Dorsolateral prefrontal cortex (tissue), 120 donors: ENCODE measurements at regions of chr10 and their contacts with region 1.

Region 1: DNA sequence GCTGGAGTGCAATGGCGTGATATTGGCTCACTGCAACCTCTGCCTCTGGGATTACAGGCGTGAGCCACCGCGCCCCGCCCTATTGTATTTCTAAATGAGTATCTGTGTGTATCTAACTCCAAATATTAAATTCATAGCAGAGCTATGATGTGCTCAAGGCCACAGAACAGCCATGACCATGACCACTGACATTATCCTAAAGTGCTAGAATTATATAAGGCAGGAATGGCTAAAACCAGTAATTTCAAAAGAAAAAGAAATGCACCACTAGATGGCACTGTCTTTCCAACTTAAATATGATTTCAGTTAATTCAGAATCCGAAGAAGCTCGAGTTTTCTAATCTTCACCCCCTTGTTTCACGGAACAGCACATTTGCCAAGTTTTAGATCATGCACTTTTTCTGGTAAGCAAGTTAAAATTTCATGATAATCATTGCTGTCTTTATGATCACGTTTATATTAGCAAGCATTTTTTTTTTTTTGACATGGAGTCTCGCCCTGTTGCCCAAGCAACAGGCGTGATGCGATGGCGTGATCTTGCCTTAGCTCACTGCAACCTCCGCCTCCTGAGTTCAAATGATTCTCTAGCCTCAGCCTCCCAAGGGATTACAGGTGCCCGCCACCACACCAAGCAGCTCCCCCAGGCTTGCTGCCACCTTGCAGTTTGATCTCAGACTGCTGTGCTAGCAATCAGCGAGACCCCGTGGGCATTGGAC is 65.3 kb downstream of the OR13A1 start:
- DNase-seq: peak in 2 of 10 donors; percentile 10 to 15
- H3K4me3 ChIP-seq: peak overlapping the region in 46 of 59 donors; percentile 3 to 49 (median 28)
- H3K27ac ChIP-seq: no peak overlapping the region
- H3K27me3 ChIP-seq: peaks cover 0 to 3% (median 0%) of the 10 kb centered on the region in 45 donors
- CTCF ChIP-seq: peak; percentile 62 to 87 (median 77)

Region 2: GRCh38 chr10:45548068-45548467 is 297.9 kb after region 1 on chr10:
- intact Hi-C with region 1: no loop called
- DNase-seq: peak in 1 of 10 donors; percentile 45
- H3K4me3 ChIP-seq: no peak overlapping the region
- H3K27ac ChIP-seq: peak overlapping the region in 14 of 59 donors; percentile 3 to 78 (median 26)
- H3K27me3 ChIP-seq: no peaks in the 10 kb centered on the region
- CTCF ChIP-seq: no peak

Region 3: DNA sequence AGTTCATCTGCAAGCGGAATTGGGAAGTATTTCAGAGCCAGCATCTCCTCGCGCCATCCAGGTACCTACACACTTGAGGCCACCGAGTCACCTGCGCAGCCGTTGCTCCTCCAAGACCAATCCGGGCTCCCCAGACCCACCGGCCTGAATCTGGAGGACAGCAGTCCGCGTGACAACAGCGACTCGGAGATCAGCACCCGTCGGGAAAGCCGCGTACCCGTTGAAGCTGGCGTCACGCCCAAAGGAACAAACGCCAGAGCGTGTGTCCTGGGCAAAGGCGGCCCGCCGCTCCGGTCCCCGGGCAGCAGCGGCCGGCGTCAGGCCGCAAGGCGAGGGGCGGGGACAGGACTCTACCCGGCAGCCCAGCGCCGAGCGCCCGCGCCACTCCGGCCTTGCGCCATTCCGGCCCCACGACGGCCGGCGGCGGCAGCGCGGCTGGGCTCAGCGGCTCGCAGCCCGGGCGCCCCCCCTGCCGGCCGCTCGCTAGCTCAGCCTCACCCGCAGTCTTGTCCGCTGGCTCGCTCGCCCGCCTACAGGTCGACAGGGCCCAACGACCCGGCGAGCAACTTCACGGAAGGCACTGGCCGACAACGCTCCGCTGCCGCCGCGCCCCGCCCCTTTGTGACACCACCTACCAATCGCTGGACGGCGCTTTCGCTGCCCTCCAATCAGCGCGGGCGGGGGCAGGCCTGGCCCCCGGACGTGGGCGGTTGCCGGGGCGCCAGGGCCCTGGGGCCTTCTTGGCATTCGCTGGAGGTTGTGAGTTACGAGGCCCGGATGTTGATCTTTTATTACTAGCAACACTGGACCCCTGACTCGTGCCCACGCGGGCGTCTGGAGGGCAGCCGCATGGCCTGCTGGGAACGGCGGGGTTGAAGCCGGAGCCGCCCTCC is 422.3 kb after region 1 on chr10 and contains the start of gene ZFAND4:
- intact Hi-C with region 1: loop called in 1 of 2 experiments (anchors 10 kb)
- DNase-seq: peak; percentile 89 to 95 (median 94)
- H3K4me3 ChIP-seq: peak within 1 kb of the TSS; percentile 57 to 90 (median 79)
- H3K27ac ChIP-seq: peak within 1 kb of the TSS; percentile 22 to 93 (median 80)
- H3K27me3 ChIP-seq: peaks cover 0 to 4% (median 0%) of the 10 kb centered on the region in 45 donors
- CTCF ChIP-seq: peak; percentile 6 to 86 (median 62)
- total RNA-seq, gene ZFAND4: 7.6 to 23.3 (median 13.3) TPM